CD4-positive, alpha-beta T cell (primary cell): ENCODE measurements at regions of chr13 and their contacts with region 1.

Region 1: DNA sequence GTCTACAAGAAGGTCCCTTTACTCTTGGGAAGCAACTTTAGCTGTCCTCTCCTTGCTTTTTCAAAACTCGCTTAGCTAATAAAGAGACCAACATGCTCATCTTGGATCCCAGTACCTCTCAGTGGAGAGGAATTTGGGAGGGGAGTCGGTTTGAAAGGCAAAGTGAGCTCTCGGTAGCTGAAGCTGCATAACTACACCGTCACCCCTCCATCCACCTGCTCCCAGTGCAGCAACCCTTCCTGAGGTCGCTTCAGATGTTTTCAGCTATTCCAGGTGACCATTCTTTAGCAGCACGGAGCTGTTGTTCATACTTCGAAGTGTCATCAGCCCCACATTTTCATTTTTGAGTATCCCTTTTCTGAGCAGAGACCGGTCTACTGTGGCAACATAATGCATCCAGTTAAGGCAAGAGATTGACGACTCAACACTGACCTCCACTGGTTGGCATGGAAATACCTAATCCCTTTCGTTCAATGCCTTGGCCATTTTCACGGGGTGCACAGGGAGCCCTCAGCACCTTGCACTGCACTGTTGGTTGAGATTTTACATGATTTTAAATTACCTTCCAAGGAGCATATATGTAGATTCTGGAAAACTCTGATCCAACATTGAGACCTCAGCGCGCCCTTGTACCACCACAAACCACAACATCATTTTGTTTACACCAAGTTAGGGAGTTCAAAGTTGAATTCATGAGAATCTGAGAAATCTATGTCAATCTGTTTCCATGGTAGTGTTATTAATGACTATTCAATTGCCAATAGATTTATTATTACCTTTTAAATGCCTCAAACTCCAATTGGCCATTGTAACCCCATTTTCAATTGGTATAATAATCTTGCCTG is 42.2 kb downstream of the DLEU7 start:
- DNase-seq: peak; percentile 19 to 85 (median 48)
- ATAC-seq: peak; percentile 88
- H3K4me3 ChIP-seq: no peak overlapping the region
- H3K4me3 Mint-ChIP-seq: no peak overlapping the region
- H3K27ac ChIP-seq: no peak overlapping the region
- H3K27ac Mint-ChIP-seq: no peak overlapping the region
- H3K4me1 ChIP-seq: peaks cover 6% of the 10 kb centered on the region
- H3K4me1 Mint-ChIP-seq: peaks cover 7% of the 10 kb centered on the region
- H3K27me3 ChIP-seq: no peaks in the 10 kb centered on the region
- H3K27me3 Mint-ChIP-seq: no peaks in the 10 kb centered on the region
- CTCF ChIP-seq: peak; percentile 75

Region 2: GRCh38 chr13:50170447-50171037 is 630.8 kb before region 1 on chr13:
- CTCF ChIA-PET with region 1: no interaction called
- POLR2A ChIA-PET with region 1: no interaction called
- intact Hi-C with region 1: loop called in 1 of 2 experiments (anchors 10 kb)
- DNase-seq: no peak
- ATAC-seq: no peak
- H3K4me3 ChIP-seq: no peak overlapping the region
- H3K4me3 Mint-ChIP-seq: no peak overlapping the region
- H3K27ac ChIP-seq: no peak overlapping the region
- H3K27ac Mint-ChIP-seq: no peak overlapping the region
- H3K4me1 ChIP-seq: no peaks in the 10 kb centered on the region
- H3K4me1 Mint-ChIP-seq: no peaks in the 10 kb centered on the region
- H3K27me3 ChIP-seq: no peaks in the 10 kb centered on the region
- H3K27me3 Mint-ChIP-seq: no peaks in the 10 kb centered on the region
- CTCF ChIP-seq: peak; percentile 9

Region 3: DNA sequence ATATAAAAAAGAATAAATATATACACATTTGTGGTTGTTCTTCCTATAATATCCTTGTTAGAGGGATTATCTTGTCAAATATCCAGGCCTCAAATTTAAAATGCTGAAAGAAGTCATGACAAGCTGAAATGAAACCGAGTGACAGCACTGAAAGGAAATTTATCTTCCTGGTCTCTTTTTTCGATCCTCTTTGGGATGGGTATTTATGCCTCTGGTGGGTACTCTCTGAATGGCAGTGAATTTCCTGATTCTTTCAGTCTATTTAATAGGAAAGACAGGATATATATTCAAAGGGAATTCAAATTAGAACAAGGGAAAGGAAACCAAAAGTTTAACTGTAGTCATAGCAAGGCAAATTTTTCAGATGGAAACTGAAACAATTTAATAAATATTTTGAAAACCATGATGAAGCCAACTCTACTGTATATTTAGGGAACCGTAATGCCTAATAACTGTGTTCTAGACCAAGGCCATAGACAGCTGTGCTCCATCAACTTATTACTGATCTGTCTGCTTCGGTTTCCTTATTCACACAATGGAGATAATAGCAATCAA is 55.7 kb before region 1 on chr13:
- CTCF ChIA-PET with region 1: no interaction called
- POLR2A ChIA-PET with region 1: no interaction called
- intact Hi-C with region 1: no loop called
- DNase-seq: no peak
- ATAC-seq: no peak
- H3K4me3 ChIP-seq: no peak overlapping the region
- H3K4me3 Mint-ChIP-seq: no peak overlapping the region
- H3K27ac ChIP-seq: no peak overlapping the region
- H3K27ac Mint-ChIP-seq: no peak overlapping the region
- H3K4me1 ChIP-seq: no peaks in the 10 kb centered on the region
- H3K4me1 Mint-ChIP-seq: no peaks in the 10 kb centered on the region
- H3K27me3 ChIP-seq: no peaks in the 10 kb centered on the region
- H3K27me3 Mint-ChIP-seq: no peaks in the 10 kb centered on the region
- CTCF ChIP-seq: no peak